Activated CD4-positive, alpha-beta memory T cell treated with anti-CD3 and anti-CD28 coated beads for 36 hours (primary cell): ENCODE measurements at regions of chr7 and their contacts with region 1.

Region 1: DNA sequence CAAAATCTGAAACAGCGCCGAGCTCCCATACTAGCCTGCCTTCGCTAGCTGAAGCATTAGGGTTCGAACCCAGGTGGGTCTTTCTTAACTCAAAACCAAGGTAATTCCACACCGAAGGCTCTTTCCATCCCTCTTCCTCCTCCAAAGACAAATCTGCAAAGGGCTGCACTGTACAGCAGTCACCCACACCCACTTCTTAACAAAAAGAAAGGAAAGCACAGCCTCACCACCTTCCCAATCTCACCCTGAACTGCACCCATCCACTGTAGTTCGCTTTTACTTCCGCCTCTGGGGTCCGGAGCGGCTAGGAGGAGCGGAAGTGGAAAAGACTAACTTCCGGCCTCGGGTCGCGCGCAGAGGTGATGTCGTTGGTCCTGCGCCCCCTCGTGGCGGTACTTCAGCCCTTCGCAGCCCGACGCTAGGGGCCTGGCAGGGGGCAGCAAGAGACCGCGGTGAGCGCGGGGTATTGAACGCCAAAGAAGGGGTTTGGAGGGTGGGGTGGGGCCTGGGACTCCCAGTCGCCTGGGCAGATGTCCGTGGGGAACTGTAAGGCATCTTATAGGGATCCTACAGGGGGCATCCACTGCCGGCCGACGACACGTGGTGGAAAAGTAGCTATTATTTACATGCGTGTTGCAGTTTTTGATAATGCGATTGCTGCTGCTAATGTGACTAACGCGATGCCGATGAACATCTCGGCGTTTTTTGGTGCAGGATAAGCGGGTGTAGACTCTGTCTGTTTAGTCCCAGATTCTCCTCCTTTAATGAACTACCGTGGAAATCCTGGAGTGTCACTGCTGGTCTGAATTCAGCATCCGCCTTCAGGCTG is at the start of gene MTERF1:
- DNase-seq: peak; percentile 95
- H3K4me3 Mint-ChIP-seq: peak within 1 kb of the TSS; percentile 96
- H3K27ac Mint-ChIP-seq: peak within 1 kb of the TSS; percentile 83
- H3K4me1 Mint-ChIP-seq: peaks cover 27% of the 10 kb centered on the region
- H3K27me3 Mint-ChIP-seq: no peaks in the 10 kb centered on the region
- total RNA-seq, gene MTERF1: 14.1 to 14.2 TPM

Region 2: DNA sequence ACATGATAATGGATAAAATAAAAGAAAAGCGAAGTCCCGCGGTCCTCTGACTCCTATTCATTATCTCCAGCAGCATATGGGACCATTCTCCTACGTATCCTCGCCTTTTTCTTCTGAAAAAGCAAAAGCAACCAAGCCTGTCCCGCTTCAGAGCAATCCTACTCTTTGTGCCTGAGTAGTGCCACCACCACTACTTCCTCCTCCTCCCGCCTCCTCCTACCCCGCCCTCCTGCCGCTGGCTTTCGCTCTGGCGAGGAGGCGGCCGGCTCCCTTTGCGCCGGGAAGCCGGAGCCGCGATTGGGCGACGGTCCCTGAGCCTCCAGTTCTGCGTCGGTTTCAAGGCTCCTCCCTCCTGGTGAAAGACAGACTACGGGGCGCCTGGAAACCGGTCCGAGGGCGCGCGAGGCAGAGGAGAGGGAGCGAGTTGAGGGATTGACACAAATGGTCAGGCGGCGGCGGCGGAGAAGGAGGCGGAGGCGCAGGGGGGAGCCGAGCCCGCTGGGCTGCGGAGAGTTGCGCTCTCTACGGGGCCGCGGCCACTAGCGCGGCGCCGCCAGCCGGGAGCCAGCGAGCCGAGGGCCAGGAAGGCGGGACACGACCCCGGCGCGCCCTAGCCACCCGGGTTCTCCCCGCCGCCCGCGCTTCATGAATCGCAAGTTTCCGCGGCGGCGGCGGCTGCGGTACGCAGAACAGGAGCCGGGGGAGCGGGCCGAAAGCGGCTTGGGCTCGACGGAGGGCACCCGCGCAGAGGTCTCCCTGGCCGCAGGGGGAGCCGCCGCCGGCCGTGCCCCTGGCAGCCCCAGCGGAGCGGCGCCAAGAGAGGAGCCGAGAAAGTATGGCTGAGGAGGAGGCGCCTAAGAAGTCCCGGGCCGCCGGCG is 616.3 kb before region 1 on chr7 and contains the start of gene FZD1:
- CTCF ChIA-PET with region 1: no interaction called
- POLR2A ChIA-PET with region 1: no interaction called
- intact Hi-C with region 1: loop called (anchors 5 kb)
- DNase-seq: peak; percentile 79
- H3K4me3 Mint-ChIP-seq: peak within 1 kb of the TSS; percentile 64
- H3K27ac Mint-ChIP-seq: no peak within 1 kb of the TSS
- H3K4me1 Mint-ChIP-seq: peaks cover 1% of the 10 kb centered on the region
- H3K27me3 Mint-ChIP-seq: peaks cover 54% of the 10 kb centered on the region
- total RNA-seq, gene FZD1: 0.05 TPM in 1 of 2 experiments, not detected in the other

Region 3: GRCh38 chr7:91835846-91836368 is 44.7 kb before region 1 on chr7:
- CTCF ChIA-PET with region 1: interaction called, 25 read pairs
- POLR2A ChIA-PET with region 1: no interaction called
- intact Hi-C with region 1: no loop called
- DNase-seq: no peak
- H3K4me3 Mint-ChIP-seq: no peak overlapping the region
- H3K27ac Mint-ChIP-seq: no peak overlapping the region
- H3K4me1 Mint-ChIP-seq: no peaks in the 10 kb centered on the region
- H3K27me3 Mint-ChIP-seq: no peaks in the 10 kb centered on the region

Region 4: DNA sequence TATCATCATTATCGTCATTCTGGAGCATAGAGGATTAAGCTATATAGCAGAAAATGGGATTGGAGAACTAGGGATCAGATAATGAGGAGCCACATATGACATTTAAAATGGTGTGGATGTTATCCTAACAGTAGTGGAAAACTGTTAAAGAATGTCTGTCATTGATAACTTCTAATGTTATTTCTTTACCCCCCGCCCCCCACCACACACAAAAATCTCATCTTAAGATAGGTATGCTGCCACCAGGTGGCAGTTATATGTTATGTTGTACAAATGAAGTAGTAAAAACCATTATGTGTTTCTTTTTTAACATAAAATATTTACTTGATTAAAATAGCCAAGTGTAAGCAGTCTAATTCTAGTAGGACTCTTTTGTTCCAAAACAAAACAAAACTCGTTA is 73.0 kb after region 1 on chr7:
- CTCF ChIA-PET with region 1: interaction called, 11 read pairs
- POLR2A ChIA-PET with region 1: interaction called, 3 read pairs
- intact Hi-C with region 1: no loop called
- DNase-seq: no peak
- H3K4me3 Mint-ChIP-seq: no peak overlapping the region
- H3K27ac Mint-ChIP-seq: no peak overlapping the region
- H3K4me1 Mint-ChIP-seq: peaks cover 23% of the 10 kb centered on the region
- H3K27me3 Mint-ChIP-seq: no peaks in the 10 kb centered on the region

Region 5: DNA sequence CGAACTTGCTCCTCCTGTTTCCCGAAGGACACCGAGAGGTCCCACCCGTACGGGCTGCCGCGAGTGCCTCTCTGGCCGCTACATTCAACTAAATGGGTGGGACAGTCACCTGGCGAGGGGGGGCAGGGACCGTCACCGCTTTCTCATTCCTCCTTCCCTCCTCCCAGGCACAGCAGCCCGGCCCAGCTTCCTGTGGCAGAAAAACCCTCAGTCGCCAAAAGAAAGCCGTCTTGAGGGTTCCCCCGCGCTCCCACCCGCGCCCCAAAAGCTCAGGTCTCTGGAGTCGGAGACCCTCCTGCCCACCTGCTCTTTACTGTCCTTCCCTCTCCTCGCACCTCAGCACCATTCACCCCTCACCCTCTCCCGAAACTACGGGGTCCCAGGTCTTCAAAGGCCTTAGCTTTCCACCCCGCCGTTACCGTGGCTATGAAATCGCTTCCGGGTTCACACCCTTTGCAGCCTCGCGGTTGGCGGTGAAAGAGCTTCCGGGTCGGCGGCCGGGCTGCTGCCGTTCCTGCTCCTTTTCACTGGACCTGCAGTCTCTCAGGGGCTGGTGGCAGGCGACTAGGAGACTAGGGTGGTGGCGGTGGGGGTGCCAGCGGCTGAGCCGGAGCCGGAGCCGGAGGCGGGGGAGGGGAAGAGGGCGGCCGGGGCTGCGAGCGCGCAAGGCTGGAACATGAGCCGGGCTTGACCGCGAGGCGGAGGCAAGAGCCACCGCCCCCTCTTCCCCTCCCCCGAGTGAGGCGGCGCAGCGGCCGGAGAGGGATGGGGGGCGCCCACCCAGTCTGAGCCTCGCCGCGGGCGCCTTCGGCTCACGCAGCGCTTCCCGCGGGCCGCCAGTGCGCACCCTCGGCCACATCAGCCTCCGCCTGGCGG is 365.1 kb after region 1 on chr7 and contains the starts of genes ANKIB1 and KRIT1:
- CTCF ChIA-PET with region 1: interaction called, 3 read pairs
- POLR2A ChIA-PET with region 1: no interaction called
- intact Hi-C with region 1: loop called (anchors 1 kb)
- DNase-seq: peak; percentile 92
- H3K4me3 Mint-ChIP-seq: peak within 1 kb of the TSS; percentile 99
- H3K27ac Mint-ChIP-seq: peak within 1 kb of the TSS; percentile 100
- H3K4me1 Mint-ChIP-seq: peaks cover 29% of the 10 kb centered on the region
- H3K27me3 Mint-ChIP-seq: no peaks in the 10 kb centered on the region
- total RNA-seq, gene ANKIB1: 34.8 to 39.9 TPM
- total RNA-seq, gene KRIT1: 29.2 to 29.3 TPM